ENCODE measurements at regions of chr2 and their contacts with region 1.

Region 1: DNA sequence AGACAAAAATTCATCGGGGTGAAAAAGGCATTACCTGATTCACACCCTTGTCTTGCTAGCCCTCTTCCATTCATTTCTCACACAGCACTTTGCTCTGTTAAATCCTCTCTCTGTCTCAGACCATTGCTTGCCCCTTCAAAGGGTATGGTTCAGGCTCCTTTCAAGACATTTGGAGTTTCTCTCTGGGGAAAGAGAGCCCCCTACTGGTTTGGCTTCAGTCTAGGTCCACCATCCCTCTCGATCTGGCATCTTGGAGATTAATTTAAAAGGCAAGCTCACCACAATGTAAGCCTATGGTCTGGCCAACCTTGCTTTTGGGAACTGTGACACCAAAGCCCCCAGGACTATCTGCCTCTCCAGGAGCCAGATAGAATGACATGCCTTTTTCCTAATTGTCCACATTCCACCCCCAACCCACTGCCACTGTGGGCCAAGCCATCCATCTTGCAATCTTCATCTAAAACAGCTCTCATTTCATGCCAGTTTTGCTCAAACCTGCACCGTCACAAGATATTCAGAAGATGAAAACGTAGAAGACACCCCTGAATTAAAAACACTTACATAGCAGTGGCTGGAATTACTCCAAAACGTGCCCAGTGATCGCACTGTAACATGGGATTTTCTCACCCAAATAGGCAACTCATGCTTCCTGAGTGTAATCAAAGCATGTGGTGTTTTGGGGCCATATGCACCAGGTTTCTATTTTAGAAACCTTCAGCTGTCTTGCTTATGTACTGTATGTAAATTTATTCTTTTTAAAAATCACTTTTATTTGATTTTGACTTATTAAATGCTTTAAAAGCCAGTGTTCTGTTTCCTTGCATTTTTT is 93.9 kb downstream of the FARSB start:
- H3K4me3 ChIP-seq: no peak overlapping the region
- H3K27ac ChIP-seq: no peak overlapping the region
- H3K4me1 ChIP-seq: no peaks in the 10 kb centered on the region
- CTCF ChIP-seq: no peak

Region 2: GRCh38 chr2:222057347-222058073 is 504.5 kb before region 1 on chr2:
- CTCF ChIA-PET with region 1: interaction called, 13 read pairs
- POLR2A ChIA-PET with region 1: no interaction called
- H3K4me3 ChIP-seq: no peak overlapping the region
- H3K27ac ChIP-seq: no peak overlapping the region
- H3K4me1 ChIP-seq: peaks cover 6% of the 10 kb centered on the region; the same call in 1 of the 2 replicates
- CTCF ChIP-seq: peak; percentile 79; the same call in 1 of the 2 replicates

Region 3: GRCh38 chr2:222518570-222519381 is 43.3 kb before region 1 on chr2:
- CTCF ChIA-PET with region 1: no interaction called
- POLR2A ChIA-PET with region 1: no interaction called
- H3K4me3 ChIP-seq: no peak overlapping the region
- H3K27ac ChIP-seq: no peak overlapping the region
- H3K4me1 ChIP-seq: no peaks in the 10 kb centered on the region
- CTCF ChIP-seq: no peak

Region 4: GRCh38 chr2:222572264-222572721 is 10.3 kb after region 1 on chr2:
- CTCF ChIA-PET with region 1: interaction called, 16 read pairs
- POLR2A ChIA-PET with region 1: no interaction called
- H3K4me3 ChIP-seq: no peak overlapping the region
- H3K27ac ChIP-seq: no peak overlapping the region
- H3K4me1 ChIP-seq: peaks cover 4% of the 10 kb centered on the region; the same call in 1 of the 2 replicates
- CTCF ChIP-seq: no peak

Region 5: GRCh38 chr2:222782201-222782730 is 220.2 kb after region 1 on chr2:
- CTCF ChIA-PET with region 1: no interaction called
- POLR2A ChIA-PET with region 1: no interaction called
- H3K4me3 ChIP-seq: no peak overlapping the region
- H3K27ac ChIP-seq: no peak overlapping the region
- H3K4me1 ChIP-seq: no peaks in the 10 kb centered on the region
- CTCF ChIP-seq: no peak

Measured in HEK293 (cell line).